ENCODE measurements at regions of chr12 and their contacts with region 1.

Region 1: DNA sequence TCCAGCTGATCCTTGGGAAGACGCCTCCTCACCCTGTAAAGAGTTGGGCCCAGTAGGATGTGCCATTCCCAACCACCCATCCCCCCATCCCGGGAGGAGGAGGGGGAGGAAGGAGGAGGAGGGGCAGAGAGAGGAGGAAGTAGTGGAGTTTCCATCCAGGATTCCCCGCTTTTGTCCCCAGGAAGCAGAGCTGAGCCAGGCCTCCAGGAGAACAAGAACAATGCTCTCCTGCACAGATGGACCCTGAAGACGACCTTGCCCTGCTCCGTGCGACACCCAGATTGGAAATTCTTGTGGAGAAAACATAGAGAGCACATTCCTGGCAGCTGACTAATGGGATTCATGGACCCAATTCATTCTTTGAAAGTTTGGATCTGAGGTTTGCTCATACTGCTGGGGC is 132.3 kb upstream of the CRY1 start:
- DNase-seq: no peak
- H3K4me3 ChIP-seq: no peak overlapping the region
- H3K27ac ChIP-seq: no peak overlapping the region
- H3K4me1 ChIP-seq: no peaks in the 10 kb centered on the region
- H3K27me3 ChIP-seq: no peaks in the 10 kb centered on the region
- CTCF ChIP-seq: no peak

Region 2: DNA sequence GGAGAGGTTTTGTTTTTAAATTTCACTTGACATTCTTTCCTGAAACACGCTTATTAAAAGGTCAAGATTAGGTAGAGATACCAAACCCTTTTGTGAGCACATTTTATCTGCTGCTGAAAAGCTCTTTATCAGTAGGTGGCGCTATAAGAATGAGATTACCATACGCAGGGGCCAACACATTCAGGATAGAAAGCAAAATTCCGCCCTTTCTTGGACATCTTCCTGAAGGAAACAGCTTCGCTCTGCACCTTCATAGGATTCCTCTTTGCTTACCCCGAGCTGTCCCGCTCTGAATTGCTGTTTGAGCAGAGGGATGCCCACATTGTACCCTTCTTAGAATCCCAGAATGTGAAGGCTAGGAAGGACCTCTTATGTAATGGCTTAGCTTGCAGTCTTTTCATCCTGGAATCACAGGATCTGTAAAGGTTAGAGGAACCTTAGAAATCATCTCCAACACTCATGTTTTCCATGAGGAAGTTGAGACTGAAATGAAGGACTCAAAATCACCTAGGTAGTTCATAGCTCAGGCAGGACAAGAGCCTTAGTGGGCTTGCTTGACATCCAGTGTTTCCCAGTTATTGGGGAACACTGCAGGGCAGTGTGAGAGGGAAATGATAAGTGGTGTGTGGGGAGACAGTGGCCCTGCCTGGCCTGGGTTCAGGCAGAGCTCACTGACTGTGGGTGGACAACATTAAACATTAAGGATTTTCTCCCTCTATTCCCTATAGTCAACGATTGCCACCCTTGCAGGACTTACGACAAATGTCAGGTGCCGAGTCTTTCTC is 93.6 kb before region 1 on chr12:
- CTCF ChIA-PET with region 1: no interaction called
- dilution Hi-C with region 1: no loop called
- in situ Hi-C with region 1: no loop called
- intact Hi-C with region 1: loop called (anchors 1 kb)
- DNase-seq: peak; percentile 53
- H3K4me3 ChIP-seq: no peak overlapping the region
- H3K27ac ChIP-seq: no peak overlapping the region
- H3K4me1 ChIP-seq: no peaks in the 10 kb centered on the region
- H3K27me3 ChIP-seq: no peaks in the 10 kb centered on the region
- CTCF ChIP-seq: peak; percentile 87 to 95

Region 3: GRCh38 chr12:107200394-107200793 is 25.2 kb before region 1 on chr12:
- CTCF ChIA-PET with region 1: no interaction called
- dilution Hi-C with region 1: no loop called
- in situ Hi-C with region 1: no loop called
- intact Hi-C with region 1: no loop called
- DNase-seq: peak; percentile 85
- H3K4me3 ChIP-seq: no peak overlapping the region
- H3K27ac ChIP-seq: no peak overlapping the region
- H3K4me1 ChIP-seq: peaks cover 7% of the 10 kb centered on the region
- H3K27me3 ChIP-seq: no peaks in the 10 kb centered on the region
- CTCF ChIP-seq: no peak

Region 4: DNA sequence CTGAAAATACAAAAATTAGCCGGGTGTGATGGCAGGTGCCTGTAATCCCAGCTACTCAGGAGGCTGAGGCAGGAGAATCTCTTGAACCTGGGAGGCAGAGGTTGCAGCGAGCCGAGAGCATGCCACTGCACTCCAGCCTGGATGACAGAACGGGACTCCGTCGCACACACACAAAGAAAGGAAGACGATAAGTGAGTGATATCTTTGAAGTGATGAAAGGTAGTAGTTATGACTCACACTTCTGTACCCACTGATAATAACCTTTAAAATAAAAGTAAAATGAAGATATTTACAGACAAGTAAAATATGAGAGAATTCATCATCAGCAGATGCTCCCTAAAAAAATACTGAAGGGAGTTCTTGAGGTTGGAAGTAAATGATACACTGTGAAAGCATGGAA is 39.0 kb after region 1 on chr12:
- CTCF ChIA-PET with region 1: no interaction called
- dilution Hi-C with region 1: loop called (anchors 5 kb)
- in situ Hi-C with region 1: no loop called
- intact Hi-C with region 1: no loop called
- DNase-seq: no peak
- H3K4me3 ChIP-seq: no peak overlapping the region
- H3K27ac ChIP-seq: no peak overlapping the region
- H3K4me1 ChIP-seq: no peaks in the 10 kb centered on the region
- H3K27me3 ChIP-seq: no peaks in the 10 kb centered on the region
- CTCF ChIP-seq: no peak

Measured in mammary epithelial cell (primary cell).